CD8-positive, alpha-beta T cell (primary cell): ENCODE measurements at regions of chr3 and their contacts with region 1.

Region 1: GRCh38 chr3:120596116-120596852 is at the start of gene NDUFB4:
- DNase-seq: peak; percentile 87 to 99 (median 95)
- ATAC-seq: peak; percentile 92
- H3K4me3 ChIP-seq: peak within 1 kb of the TSS; percentile 77 to 92
- H3K4me3 Mint-ChIP-seq: peak within 1 kb of the TSS; percentile 94
- H3K27ac ChIP-seq: peak within 1 kb of the TSS; percentile 91 to 95
- H3K27ac Mint-ChIP-seq: peak within 1 kb of the TSS; percentile 97
- H3K4me1 ChIP-seq: peaks cover 34% of the 10 kb centered on the region
- H3K4me1 Mint-ChIP-seq: peaks cover 12% of the 10 kb centered on the region
- H3K27me3 ChIP-seq: no peaks in the 10 kb centered on the region
- H3K27me3 Mint-ChIP-seq: no peaks in the 10 kb centered on the region
- CTCF ChIP-seq: no peak
- total RNA-seq, gene NDUFB4: 63.2 to 71.5 TPM

Region 2: DNA sequence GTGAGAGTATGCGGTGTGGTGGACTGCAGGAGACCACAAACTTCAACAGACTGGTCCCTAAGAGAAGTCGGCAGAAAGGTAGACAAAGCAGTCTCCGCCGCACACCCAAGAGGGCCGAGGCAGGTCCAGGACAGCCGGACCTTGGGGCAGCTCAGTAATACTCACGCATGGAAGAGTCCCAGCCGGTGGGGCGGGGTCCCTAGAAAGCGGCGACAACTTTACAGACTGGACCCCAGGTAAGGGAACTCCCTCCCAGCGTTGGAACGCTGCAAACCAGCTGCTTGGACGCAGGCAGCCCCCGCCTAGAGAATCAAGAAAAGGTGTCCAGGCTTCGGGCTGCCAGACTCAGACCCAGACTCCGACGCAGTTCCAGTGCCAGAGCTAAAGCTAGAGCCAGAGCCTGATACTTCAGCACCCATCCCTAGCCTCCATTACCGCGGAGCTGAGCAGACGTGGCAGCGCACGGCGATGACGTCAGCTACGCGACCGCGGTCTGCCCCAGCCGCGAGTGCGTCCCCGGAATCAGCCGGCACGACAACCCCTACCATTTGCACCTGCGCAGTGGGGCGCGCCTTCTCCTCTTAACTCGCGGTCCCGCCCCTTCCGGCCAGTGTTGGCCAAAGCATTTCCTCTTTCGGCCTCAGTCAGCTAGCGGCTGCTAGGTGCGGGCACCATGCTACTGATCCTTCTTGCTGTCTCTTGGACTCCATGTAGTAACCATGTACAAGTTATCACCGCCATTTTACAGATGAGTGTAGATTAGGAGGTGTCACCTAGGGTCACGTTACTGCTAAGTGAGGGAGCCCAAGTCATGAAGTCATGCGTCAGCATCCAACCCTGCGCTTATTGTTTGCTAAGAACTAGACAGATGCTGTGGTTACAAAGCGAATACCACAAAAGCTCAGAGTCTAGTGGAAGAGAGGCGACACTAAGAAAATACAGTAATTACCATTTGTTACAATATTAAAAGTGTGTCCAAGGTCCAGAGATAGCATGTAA is 1132.8 kb before region 1 on chr3 and contains the start of gene TMEM39A:
- CTCF ChIA-PET with region 1: no interaction called
- POLR2A ChIA-PET with region 1: no interaction called
- intact Hi-C with region 1: loop called in 1 of 2 experiments (anchors 10 kb)
- DNase-seq: peak; percentile 98 to 100 (median 99)
- ATAC-seq: peak; percentile 86
- H3K4me3 ChIP-seq: peak within 1 kb of the TSS; percentile 93 to 94
- H3K4me3 Mint-ChIP-seq: peak within 1 kb of the TSS; percentile 93
- H3K27ac ChIP-seq: peak within 1 kb of the TSS; percentile 85 to 97
- H3K27ac Mint-ChIP-seq: peak within 1 kb of the TSS; percentile 96
- H3K4me1 ChIP-seq: peaks cover 19% of the 10 kb centered on the region
- H3K4me1 Mint-ChIP-seq: peaks cover 44% of the 10 kb centered on the region
- H3K27me3 ChIP-seq: no peaks in the 10 kb centered on the region
- H3K27me3 Mint-ChIP-seq: no peaks in the 10 kb centered on the region
- CTCF ChIP-seq: no peak
- total RNA-seq, gene TMEM39A: 67.8 to 68.0 TPM

Region 3: DNA sequence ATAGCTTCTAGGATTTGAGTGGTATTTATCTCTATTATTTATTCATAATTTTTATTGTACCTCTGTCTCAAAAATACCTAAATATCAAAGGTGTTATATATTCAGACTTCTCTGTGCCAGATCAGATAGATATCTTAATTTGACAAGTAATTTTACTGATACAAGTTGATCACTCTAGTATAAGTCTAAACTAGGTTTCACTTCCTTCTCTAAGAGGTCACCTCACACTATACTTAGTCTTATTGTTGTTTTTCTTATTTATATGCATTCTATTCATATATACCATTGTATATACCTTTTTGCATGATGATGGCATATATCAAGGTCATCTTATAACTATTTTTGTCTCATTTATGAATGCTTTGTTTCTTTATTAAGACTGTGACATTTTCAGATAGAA is 112.1 kb after region 1 on chr3:
- CTCF ChIA-PET with region 1: no interaction called
- POLR2A ChIA-PET with region 1: no interaction called
- intact Hi-C with region 1: loop called in 1 of 2 experiments (anchors 10 kb)
- DNase-seq: no peak
- ATAC-seq: no peak
- H3K4me3 ChIP-seq: no peak overlapping the region
- H3K4me3 Mint-ChIP-seq: no peak overlapping the region
- H3K27ac ChIP-seq: no peak overlapping the region
- H3K27ac Mint-ChIP-seq: peak overlapping the region; percentile 4
- H3K4me1 ChIP-seq: no peaks in the 10 kb centered on the region
- H3K4me1 Mint-ChIP-seq: peaks cover 9% of the 10 kb centered on the region
- H3K27me3 ChIP-seq: no peaks in the 10 kb centered on the region
- H3K27me3 Mint-ChIP-seq: no peaks in the 10 kb centered on the region
- CTCF ChIP-seq: no peak

Region 4: DNA sequence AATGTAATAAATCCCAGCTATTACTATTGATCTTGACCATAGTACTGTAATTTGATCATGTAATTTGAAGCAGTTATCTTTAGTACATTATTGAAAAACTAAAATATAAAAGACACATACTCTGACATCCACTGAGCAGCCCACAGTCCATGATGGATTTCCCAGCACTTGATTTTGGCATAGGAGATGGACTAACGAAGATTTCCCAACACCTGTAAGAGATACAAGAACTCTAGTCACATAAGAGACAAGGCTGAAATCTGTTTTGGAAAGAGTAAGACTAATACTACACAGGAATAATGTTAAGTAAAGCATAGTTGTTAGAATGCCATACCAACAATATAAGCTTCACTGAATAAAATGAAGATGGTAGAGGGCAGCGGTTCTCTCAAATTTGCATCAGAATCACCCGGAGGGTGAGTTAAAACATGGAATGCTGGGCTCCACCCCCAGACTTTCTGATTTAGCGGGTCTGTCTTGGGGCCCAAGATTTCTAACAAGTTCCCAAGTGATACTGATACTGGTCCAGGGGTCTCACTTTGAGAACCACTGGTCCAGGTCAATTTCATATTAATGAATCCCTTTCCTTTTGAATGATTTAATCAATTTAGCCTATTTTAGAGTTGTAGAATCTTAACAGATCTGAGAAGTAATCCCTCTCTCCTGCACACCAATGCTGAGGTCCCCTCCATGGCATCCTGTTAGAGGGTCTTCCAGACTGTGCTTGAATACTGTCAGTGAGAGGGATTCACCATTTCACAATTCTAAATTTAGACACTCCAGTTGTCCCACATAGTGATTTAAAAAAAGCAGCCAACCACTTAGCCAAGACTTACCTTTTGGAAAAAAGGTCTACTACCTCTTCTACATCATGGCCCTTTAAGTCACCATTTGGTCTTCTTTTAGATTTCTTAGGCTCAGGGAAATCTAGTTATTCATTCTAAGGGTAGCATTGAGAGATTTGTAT is 134.6 kb after region 1 on chr3:
- CTCF ChIA-PET with region 1: no interaction called
- POLR2A ChIA-PET with region 1: no interaction called
- intact Hi-C with region 1: no loop called
- DNase-seq: no peak
- ATAC-seq: no peak
- H3K4me3 ChIP-seq: no peak overlapping the region
- H3K4me3 Mint-ChIP-seq: no peak overlapping the region
- H3K27ac ChIP-seq: no peak overlapping the region
- H3K27ac Mint-ChIP-seq: peak overlapping the region; percentile 37
- H3K4me1 ChIP-seq: no peaks in the 10 kb centered on the region
- H3K4me1 Mint-ChIP-seq: peaks cover 9% of the 10 kb centered on the region
- H3K27me3 ChIP-seq: no peaks in the 10 kb centered on the region
- H3K27me3 Mint-ChIP-seq: no peaks in the 10 kb centered on the region
- CTCF ChIP-seq: no peak